Endothelial cell of umbilical vein (primary cell): ENCODE measurements at regions of chr14 and their contacts with region 1.

Region 1: GRCh38 chr14:51979088-51979709 is 10.1 kb upstream of the RTRAF start:
- DNase-seq: peak; percentile 80
- H3K4me3 ChIP-seq: no peak overlapping the region
- H3K27ac ChIP-seq: no peak overlapping the region
- H3K4me1 ChIP-seq: no peaks in the 10 kb centered on the region
- H3K27me3 ChIP-seq: peaks cover 22 to 34% of the 10 kb centered on the region in 2 experiments
- CTCF ChIP-seq: peak; percentile 82 to 90
- POLR2A ChIP-seq: no peak

Region 2: GRCh38 chr14:51724650-51725049 is 254.5 kb before region 1 on chr14:
- CTCF ChIA-PET with region 1: no interaction called
- POLR2A ChIA-PET with region 1: no interaction called
- dilution Hi-C with region 1: no loop called
- intact Hi-C with region 1: no loop called
- DNase-seq: no peak
- H3K4me3 ChIP-seq: no peak overlapping the region
- H3K27ac ChIP-seq: no peak overlapping the region
- H3K4me1 ChIP-seq: peaks cover 16% of the 10 kb centered on the region
- H3K27me3 ChIP-seq: no peaks in the 10 kb centered on the region
- CTCF ChIP-seq: no peak
- POLR2A ChIP-seq: no peak

Region 3: GRCh38 chr14:51825926-51826325 is 153.3 kb before region 1 on chr14:
- CTCF ChIA-PET with region 1: interaction called, 4 read pairs
- POLR2A ChIA-PET with region 1: no interaction called
- dilution Hi-C with region 1: no loop called
- intact Hi-C with region 1: loop called (anchors 2 kb)
- DNase-seq: no peak
- H3K4me3 ChIP-seq: no peak overlapping the region
- H3K27ac ChIP-seq: no peak overlapping the region
- H3K4me1 ChIP-seq: no peaks in the 10 kb centered on the region
- H3K27me3 ChIP-seq: peaks cover 15 to 20% of the 10 kb centered on the region in 2 experiments
- CTCF ChIP-seq: no peak
- POLR2A ChIP-seq: no peak

Region 4: GRCh38 chr14:51901475-51902024 is 77.6 kb before region 1 on chr14:
- CTCF ChIA-PET with region 1: interaction called, 13 read pairs
- POLR2A ChIA-PET with region 1: no interaction called
- dilution Hi-C with region 1: no loop called
- intact Hi-C with region 1: no loop called
- DNase-seq: no peak
- H3K4me3 ChIP-seq: no peak overlapping the region
- H3K27ac ChIP-seq: no peak overlapping the region
- H3K4me1 ChIP-seq: peaks cover 8% of the 10 kb centered on the region
- H3K27me3 ChIP-seq: peaks cover 4 to 17% of the 10 kb centered on the region in 2 experiments
- CTCF ChIP-seq: no peak
- POLR2A ChIP-seq: no peak

Region 5: DNA sequence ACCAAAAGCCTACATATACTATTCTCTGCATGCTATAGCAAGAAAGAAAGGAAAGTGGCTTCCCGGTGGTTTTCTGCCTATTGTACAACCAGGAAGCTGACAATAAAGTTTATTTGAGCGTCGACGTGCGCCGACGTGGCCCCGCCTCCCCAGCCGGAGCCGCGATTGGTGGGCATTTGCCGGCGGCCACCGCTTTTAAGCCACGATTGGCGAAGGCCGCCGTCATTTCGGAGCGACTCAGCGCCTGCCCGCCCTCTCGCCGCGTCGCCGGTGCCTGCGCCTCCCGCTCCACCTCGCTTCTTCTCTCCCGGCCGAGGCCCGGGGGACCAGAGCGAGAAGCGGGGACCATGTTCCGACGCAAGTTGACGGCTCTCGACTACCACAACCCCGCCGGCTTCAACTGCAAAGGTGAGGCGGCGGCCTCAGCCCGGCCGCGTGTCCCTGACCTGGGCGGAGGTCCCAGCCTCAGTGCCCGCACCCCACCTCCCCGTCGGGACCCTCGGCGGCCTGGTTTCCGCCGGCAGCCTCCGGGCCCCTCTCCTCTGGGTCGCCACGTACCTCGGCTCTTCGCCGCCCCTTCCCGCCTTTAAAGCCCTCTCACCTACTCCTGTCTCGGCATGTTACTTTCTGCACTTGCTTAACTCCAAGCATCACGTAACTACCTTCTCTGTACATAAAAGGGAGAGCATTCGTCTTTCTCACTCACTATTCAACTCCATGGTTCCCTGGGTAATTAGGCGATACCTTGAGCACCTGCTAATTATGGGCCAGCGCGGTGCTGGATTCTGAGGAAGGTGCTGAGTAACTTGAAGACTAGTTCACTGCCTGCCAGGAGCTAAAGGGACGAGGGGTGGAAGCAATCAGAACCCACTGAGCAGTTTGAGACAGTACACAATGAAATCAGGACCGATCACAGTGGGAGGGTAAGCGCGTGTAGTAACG is 10.4 kb after region 1 on chr14 and contains the start of gene RTRAF:
- CTCF ChIA-PET with region 1: interaction called, 15 read pairs
- POLR2A ChIA-PET with region 1: no interaction called
- dilution Hi-C with region 1: no loop called
- intact Hi-C with region 1: no loop called
- DNase-seq: peak; percentile 97
- H3K4me3 ChIP-seq: peak within 1 kb of the TSS; percentile 57 to 87 (median 58)
- H3K27ac ChIP-seq: peak within 1 kb of the TSS; percentile 47
- H3K4me1 ChIP-seq: peaks cover 14% of the 10 kb centered on the region
- H3K27me3 ChIP-seq: peaks cover 7 to 9% of the 10 kb centered on the region in 2 experiments
- CTCF ChIP-seq: no peak
- POLR2A ChIP-seq: peak; percentile 84
- total RNA-seq, gene RTRAF: 225 and 237 TPM in 2 replicates

Region 6: DNA sequence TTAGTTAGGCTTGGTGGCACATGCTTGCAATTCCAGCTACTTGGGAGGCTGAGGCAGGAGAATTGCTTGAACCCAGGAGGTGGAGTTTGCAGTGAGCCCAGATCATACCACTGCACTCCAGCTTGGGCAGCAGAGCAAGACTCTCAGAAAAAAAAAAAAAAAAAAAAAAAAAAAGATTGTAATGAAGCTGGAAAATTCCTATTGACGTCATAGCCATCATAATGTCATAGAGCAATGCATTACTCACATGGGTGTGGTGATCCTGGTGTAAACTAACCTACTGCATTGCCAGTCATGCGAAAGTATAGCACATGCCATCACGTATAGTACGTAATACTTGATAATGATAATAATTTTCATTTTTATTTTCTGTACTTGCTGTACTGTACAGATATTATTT is 132.4 kb after region 1 on chr14:
- CTCF ChIA-PET with region 1: no interaction called
- POLR2A ChIA-PET with region 1: no interaction called
- dilution Hi-C with region 1: no loop called
- intact Hi-C with region 1: no loop called
- DNase-seq: no peak
- H3K4me3 ChIP-seq: no peak overlapping the region
- H3K27ac ChIP-seq: no peak overlapping the region
- H3K4me1 ChIP-seq: no peaks in the 10 kb centered on the region
- H3K27me3 ChIP-seq: peaks cover 0 to 2% of the 10 kb centered on the region in 2 experiments
- CTCF ChIP-seq: no peak
- POLR2A ChIP-seq: no peak